BJ (cell line): ENCODE measurements at regions of chr10 and their contacts with region 1.

Region 1: GRCh38 chr10:97222326-97222961 is 36.7 kb upstream of the SLIT1 start:
- DNase-seq: no peak
- H3K4me3 ChIP-seq: no peak overlapping the region
- H3K27me3 ChIP-seq: no peaks in the 10 kb centered on the region
- CTCF ChIP-seq: no peak

Region 2: GRCh38 chr10:96803318-96803664 is 419.2 kb before region 1 on chr10:
- CTCF ChIA-PET with region 1: no interaction called
- POLR2A ChIA-PET with region 1: no interaction called
- DNase-seq: no peak
- H3K4me3 ChIP-seq: no peak overlapping the region
- H3K27me3 ChIP-seq: no peaks in the 10 kb centered on the region
- CTCF ChIP-seq: no peak

Region 3: DNA sequence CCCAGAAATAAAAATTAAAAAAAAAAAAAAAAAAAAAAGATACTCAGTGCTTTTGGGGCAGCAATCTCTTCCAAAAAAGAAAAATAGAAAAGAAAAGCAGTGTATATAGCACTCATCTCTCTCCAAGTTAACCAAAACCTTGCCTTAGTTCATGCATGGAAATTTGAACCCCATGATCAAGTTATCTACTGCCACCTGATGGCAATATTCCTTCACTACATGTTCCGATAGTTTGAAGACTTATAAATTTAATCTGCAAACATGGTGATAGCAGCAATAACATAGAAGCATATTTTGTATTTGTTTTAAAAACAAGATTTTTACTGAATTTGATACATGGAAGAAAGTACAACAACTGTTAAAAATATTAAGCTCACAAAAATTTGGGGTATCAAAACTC is 12.0 kb after region 1 on chr10:
- CTCF ChIA-PET with region 1: interaction called, 12 read pairs
- POLR2A ChIA-PET with region 1: no interaction called
- DNase-seq: no peak
- H3K4me3 ChIP-seq: no peak overlapping the region
- H3K27me3 ChIP-seq: no peaks in the 10 kb centered on the region
- CTCF ChIP-seq: peak; percentile 60